ENCODE measurements at regions of chr4 and their contacts with region 1.

Region 1: GRCh38 chr4:41887821-41888686 is 47.2 kb upstream of the TMEM33 start:
- DNase-seq: no peak
- CTCF ChIP-seq: peak; percentile 82

Region 2: GRCh38 chr4:41692717-41693345 is 195.2 kb before region 1 on chr4:
- CTCF ChIA-PET with region 1: interaction called, 17 read pairs
- POLR2A ChIA-PET with region 1: no interaction called
- DNase-seq: peak; percentile 27
- CTCF ChIP-seq: peak; percentile 75

Region 3: GRCh38 chr4:41873380-41874295 is 14.4 kb before region 1 on chr4:
- CTCF ChIA-PET with region 1: interaction called, 15 read pairs
- POLR2A ChIA-PET with region 1: no interaction called
- DNase-seq: no peak
- CTCF ChIP-seq: no peak

Measured in GM10248 (cell line).